CD4-positive, alpha-beta T cell (primary cell): ENCODE measurements at regions of chr7 and their contacts with region 1.

Region 1: GRCh38 chr7:108146070-108146837 is 16.1 kb upstream of the LAMB4 start:
- DNase-seq: peak in 8 of 14 experiments; percentile 1 to 62 (median 31)
- ATAC-seq: no peak
- H3K4me3 ChIP-seq: no peak overlapping the region
- H3K4me3 Mint-ChIP-seq: no peak overlapping the region
- H3K27ac ChIP-seq: no peak overlapping the region
- H3K27ac Mint-ChIP-seq: no peak overlapping the region
- H3K4me1 ChIP-seq: peaks cover 3% of the 10 kb centered on the region
- H3K4me1 Mint-ChIP-seq: no peaks in the 10 kb centered on the region
- H3K27me3 ChIP-seq: peaks cover under 1 to 6% of the 10 kb centered on the region in 2 experiments
- H3K27me3 Mint-ChIP-seq: peaks cover 9% of the 10 kb centered on the region
- CTCF ChIP-seq: peak; percentile 67

Region 2: GRCh38 chr7:107462740-107463444 is 683.4 kb before region 1 on chr7:
- CTCF ChIA-PET with region 1: no interaction called
- POLR2A ChIA-PET with region 1: no interaction called
- intact Hi-C with region 1: loop called in 1 of 2 experiments (anchors 10 kb)
- DNase-seq: peak; percentile 10 to 76 (median 32)
- ATAC-seq: peak; percentile 73
- H3K4me3 ChIP-seq: no peak overlapping the region
- H3K4me3 Mint-ChIP-seq: no peak overlapping the region
- H3K27ac ChIP-seq: no peak overlapping the region
- H3K27ac Mint-ChIP-seq: no peak overlapping the region
- H3K4me1 ChIP-seq: no peaks in the 10 kb centered on the region
- H3K4me1 Mint-ChIP-seq: peaks cover 4% of the 10 kb centered on the region
- H3K27me3 ChIP-seq: no peaks in the 10 kb centered on the region
- H3K27me3 Mint-ChIP-seq: no peaks in the 10 kb centered on the region
- CTCF ChIP-seq: peak; percentile 60

Region 3: GRCh38 chr7:108114117-108114841 is 32.0 kb before region 1 on chr7:
- CTCF ChIA-PET with region 1: no interaction called
- POLR2A ChIA-PET with region 1: no interaction called
- intact Hi-C with region 1: loop called (anchors 2 kb)
- DNase-seq: peak in 3 of 14 experiments; percentile 6 to 17 (median 17)
- ATAC-seq: no peak
- H3K4me3 ChIP-seq: no peak overlapping the region
- H3K4me3 Mint-ChIP-seq: no peak overlapping the region
- H3K27ac ChIP-seq: no peak overlapping the region
- H3K27ac Mint-ChIP-seq: no peak overlapping the region
- H3K4me1 ChIP-seq: no peaks in the 10 kb centered on the region
- H3K4me1 Mint-ChIP-seq: no peaks in the 10 kb centered on the region
- H3K27me3 ChIP-seq: no peaks in the 10 kb centered on the region
- H3K27me3 Mint-ChIP-seq: no peaks in the 10 kb centered on the region
- CTCF ChIP-seq: peak; percentile 41